ENCODE measurements at regions of chr6 and their contacts with region 1.

Region 1: GRCh38 chr6:130282234-130282995 is 59.7 kb upstream of the SAMD3 start:
- DNase-seq: peak; percentile 50
- ATAC-seq: peak; percentile 76
- H3K4me3 Mint-ChIP-seq: no peak overlapping the region
- H3K27ac Mint-ChIP-seq: no peak overlapping the region
- H3K4me1 Mint-ChIP-seq: peaks cover 7% of the 10 kb centered on the region
- H3K27me3 Mint-ChIP-seq: no peaks in the 10 kb centered on the region

Region 2: GRCh38 chr6:130037207-130037811 is 245.1 kb before region 1 on chr6:
- CTCF ChIA-PET with region 1: interaction called, 3 read pairs
- POLR2A ChIA-PET with region 1: no interaction called
- intact Hi-C with region 1: loop called in 1 of 2 experiments (anchors 1 kb)
- DNase-seq: no peak
- ATAC-seq: no peak
- H3K4me3 Mint-ChIP-seq: no peak overlapping the region
- H3K27ac Mint-ChIP-seq: no peak overlapping the region
- H3K4me1 Mint-ChIP-seq: peaks cover 41% of the 10 kb centered on the region
- H3K27me3 Mint-ChIP-seq: no peaks in the 10 kb centered on the region

Region 3: DNA sequence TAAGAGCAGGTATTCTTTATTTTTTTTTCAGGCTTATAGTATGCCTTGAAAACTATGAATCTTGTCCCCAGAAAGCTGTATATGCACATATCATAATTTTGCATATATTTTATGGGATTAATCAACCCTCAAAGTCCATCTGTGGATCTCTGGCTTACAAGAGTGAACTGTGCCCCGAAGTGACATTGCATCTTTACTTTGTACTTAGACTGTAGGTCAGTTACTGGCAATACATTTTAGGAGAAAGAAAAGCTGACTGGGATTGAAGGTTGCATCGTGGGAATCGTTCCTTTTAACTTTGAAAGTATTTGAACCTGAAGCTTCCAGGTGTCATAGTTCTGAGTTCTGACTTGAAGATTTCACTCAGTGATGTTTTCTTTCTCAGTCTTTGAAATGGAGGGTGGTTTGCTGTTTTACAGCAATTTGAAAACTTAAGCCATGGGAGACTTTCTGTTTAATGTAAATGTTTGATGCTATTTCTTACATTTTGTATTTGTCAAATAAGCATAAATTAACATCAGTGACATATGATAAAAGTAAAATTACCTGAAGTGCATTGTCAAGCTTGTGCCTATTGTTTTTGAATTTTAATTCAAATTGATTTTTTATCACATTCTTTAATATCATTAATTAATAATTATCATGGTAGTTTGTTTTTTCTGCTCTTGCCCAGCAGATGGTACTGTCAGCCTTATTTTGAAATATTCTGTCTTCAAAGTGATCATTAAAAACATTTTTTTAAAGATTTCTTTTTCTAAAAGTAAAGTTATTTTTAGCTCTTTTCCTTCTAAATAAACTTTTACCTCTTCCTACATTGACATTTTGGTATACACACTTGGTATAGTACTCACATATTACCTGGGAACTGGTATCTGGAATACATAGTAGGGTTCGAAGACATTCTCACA is 235.1 kb before region 1 on chr6:
- CTCF ChIA-PET with region 1: interaction called, 6 read pairs
- POLR2A ChIA-PET with region 1: no interaction called
- intact Hi-C with region 1: loop called in 1 of 2 experiments (anchors 1 kb)
- DNase-seq: no peak
- ATAC-seq: no peak
- H3K4me3 Mint-ChIP-seq: no peak overlapping the region
- H3K27ac Mint-ChIP-seq: no peak overlapping the region
- H3K4me1 Mint-ChIP-seq: no peaks in the 10 kb centered on the region
- H3K27me3 Mint-ChIP-seq: no peaks in the 10 kb centered on the region

Region 4: DNA sequence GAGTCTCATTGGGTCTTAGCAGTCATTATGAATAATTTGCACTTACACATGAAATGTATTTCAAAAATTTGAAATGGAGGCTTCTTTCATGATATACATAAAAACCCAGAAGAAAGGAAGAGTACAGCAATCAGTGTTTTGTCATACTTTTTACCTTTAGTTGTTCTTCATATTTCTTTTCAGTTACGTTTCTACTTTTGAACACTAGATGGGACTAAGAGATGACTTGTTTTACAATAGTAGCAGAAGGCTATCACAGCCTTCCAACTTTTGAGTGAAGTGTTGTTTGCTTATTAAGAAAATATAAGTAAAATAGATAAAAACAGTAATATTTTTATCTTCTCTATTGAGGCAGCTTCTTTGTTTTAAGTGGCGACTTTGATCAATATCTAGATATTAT is 205.9 kb before region 1 on chr6:
- CTCF ChIA-PET with region 1: interaction called, 11 read pairs
- POLR2A ChIA-PET with region 1: no interaction called
- intact Hi-C with region 1: loop called (anchors 1 kb)
- DNase-seq: no peak
- ATAC-seq: no peak
- H3K4me3 Mint-ChIP-seq: no peak overlapping the region
- H3K27ac Mint-ChIP-seq: no peak overlapping the region
- H3K4me1 Mint-ChIP-seq: peaks cover 13% of the 10 kb centered on the region
- H3K27me3 Mint-ChIP-seq: no peaks in the 10 kb centered on the region

Region 5: GRCh38 chr6:130148181-130148580 is 134.2 kb before region 1 on chr6:
- CTCF ChIA-PET with region 1: no interaction called
- POLR2A ChIA-PET with region 1: no interaction called
- intact Hi-C with region 1: loop called in 1 of 2 experiments (anchors 10 kb)
- DNase-seq: peak; percentile 25
- ATAC-seq: peak; percentile 58
- H3K4me3 Mint-ChIP-seq: no peak overlapping the region
- H3K27ac Mint-ChIP-seq: no peak overlapping the region
- H3K4me1 Mint-ChIP-seq: no peaks in the 10 kb centered on the region
- H3K27me3 Mint-ChIP-seq: no peaks in the 10 kb centered on the region

Measured in activated CD4-positive, alpha-beta T cell treated with anti-CD3 and anti-CD28 coated beads for 36 hours (primary cell).